ENCODE measurements at regions of chr1 and their contacts with region 1.

Region 1: GRCh38 chr1:61453111-61453961 is 271.6 kb downstream of the TM2D1 start:
- DNase-seq: peak; percentile 89 to 96 (median 93)
- ATAC-seq: peak; percentile 75 to 87
- H3K4me3 ChIP-seq: no peak overlapping the region
- H3K27ac ChIP-seq: peak overlapping the region; percentile 88
- H3K4me1 ChIP-seq: peaks cover 27% of the 10 kb centered on the region
- H3K27me3 ChIP-seq: no peaks in the 10 kb centered on the region

Region 2: GRCh38 chr1:60978421-60979357 is 474.6 kb before region 1 on chr1:
- intact Hi-C with region 1: loop called in 1 of 4 experiments (anchors 10 kb)
- DNase-seq: peak in 1 of 3 donors; percentile 48
- ATAC-seq: peak; percentile 56 to 68
- H3K4me3 ChIP-seq: no peak overlapping the region
- H3K27ac ChIP-seq: no peak overlapping the region
- H3K4me1 ChIP-seq: no peaks in the 10 kb centered on the region
- H3K27me3 ChIP-seq: no peaks in the 10 kb centered on the region

Region 3: DNA sequence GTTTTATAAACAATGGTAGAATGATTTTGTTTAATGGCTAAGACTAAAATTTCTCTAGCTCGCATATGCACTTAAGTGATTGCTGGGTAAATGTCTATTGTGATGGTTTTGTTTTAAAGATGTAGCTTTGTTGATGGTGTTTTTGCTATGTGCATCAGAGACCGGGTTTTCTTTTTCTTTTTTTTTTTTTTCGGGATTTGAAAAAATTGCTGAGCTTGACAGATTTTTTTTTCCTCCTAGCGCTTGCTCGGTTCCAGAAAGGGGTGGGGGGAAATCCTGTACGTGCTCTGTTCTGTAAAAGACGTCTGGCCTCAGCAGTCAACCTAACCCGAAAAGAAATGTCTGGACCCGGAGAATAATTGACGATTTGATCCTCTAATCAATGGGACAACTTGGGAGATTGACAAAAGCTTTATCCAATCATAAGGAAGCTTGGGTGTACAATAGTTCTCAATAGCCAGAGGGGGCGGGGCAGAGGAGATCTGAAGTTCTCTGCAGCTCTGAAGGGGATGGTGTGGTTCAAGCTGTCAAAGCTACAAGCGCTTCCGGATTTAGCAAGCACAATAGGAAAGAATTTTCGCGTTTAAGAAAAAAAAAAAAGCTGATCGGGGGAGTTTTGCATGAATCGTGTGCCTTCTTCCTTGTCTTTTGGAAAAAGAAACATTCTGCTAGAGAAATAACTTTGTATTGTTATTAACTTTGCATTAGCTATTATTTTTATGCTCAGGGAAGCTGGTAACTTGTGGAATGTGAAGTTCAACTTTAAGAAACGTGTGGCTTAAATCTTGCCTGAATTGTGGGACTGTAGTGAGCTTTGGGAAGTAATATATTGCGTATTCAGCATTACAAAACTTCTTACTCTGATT is 375.4 kb before region 1 on chr1:
- intact Hi-C with region 1: loop called in 1 of 4 experiments (anchors 10 kb)
- DNase-seq: peak; percentile 93 to 97 (median 94)
- ATAC-seq: peak; percentile 85 to 89
- H3K4me3 ChIP-seq: peak overlapping the region; percentile 91
- H3K27ac ChIP-seq: peak overlapping the region; percentile 62
- H3K4me1 ChIP-seq: peaks cover 8% of the 10 kb centered on the region
- H3K27me3 ChIP-seq: no peaks in the 10 kb centered on the region

Region 4: DNA sequence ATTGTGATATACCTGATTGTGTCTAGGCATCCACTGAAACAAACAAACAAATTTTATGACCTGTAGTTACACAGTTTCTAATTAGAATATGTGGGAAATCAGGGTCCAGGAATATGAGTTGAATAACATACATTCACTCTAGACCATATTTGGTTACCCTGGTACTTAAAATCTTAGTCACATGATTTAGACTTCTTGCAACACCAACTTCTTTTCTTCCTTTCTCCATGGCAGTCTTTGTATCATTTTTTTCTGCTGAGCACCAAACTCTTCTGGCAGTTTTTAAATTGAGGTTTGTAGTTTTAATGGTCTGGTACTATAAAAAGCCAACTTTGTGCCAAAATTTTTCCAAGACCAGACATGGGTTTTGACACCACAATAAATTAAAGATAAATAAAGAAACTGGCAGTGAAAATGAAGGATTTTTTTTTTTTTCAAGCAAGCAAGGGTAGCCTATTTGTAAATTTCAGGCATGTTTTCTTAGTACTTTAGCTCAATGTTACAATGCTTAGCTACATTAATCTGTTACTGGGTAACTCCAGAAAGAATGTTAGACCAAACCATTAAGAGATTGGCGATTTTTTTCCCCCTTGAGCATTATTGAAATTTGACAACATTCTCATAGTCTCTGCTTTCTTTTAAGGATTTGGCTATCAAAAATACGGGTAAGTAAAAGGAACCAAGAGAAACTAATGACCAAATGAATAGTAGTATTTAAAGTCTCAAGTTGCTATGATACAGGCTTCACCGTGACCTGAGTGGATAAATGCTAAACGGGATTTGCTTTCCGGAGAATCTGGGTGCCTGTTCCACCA is 262.5 kb before region 1 on chr1:
- intact Hi-C with region 1: loop called in 1 of 4 experiments (anchors 5 kb)
- DNase-seq: no peak
- ATAC-seq: no peak
- H3K4me3 ChIP-seq: no peak overlapping the region
- H3K27ac ChIP-seq: peak overlapping the region; percentile 47
- H3K4me1 ChIP-seq: peaks cover 8% of the 10 kb centered on the region
- H3K27me3 ChIP-seq: no peaks in the 10 kb centered on the region

Region 5: DNA sequence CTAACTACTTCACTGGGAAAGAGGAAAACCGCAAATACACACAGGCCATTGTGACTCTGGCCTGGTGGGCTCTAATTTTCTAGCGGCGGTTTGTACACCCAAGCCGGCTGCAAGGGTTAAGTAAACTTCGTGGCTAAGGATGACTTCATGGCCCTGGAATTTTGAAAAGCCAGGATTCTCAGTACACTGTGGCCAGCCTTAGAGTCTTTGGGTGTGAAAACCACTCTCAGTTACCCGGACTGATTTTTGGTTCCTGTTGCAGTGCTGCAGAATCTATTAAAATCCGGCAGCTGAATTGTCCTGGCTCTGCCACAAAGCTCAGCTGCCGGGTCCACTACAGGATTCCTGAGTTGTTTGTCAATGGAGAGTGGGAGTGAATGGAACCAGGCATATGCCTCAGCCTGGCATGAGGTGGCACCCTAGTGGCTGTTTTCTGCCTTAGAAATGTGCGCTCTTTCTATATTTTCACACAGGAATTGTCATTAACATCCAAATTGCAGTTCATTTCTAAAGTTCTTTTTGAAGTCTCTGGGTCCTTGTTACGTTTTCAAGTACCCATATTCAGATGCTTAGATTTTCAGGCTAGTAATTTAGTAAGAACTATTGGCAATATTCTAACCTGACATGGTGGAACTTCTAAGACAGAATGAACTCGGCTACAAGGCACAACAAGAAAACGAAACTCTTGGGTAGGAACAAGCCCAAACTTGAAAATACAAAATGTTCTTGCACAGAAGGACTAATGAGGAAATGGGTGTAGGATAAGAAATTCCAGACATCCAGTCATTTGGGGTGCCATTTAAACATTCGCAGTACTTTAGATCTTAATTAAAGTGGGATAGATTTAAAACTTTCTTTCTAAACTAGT is 115.1 kb before region 1 on chr1:
- intact Hi-C with region 1: loop called in 3 of 4 experiments (anchors 5 to 10 kb)
- DNase-seq: peak; percentile 69 to 87 (median 78)
- ATAC-seq: peak; percentile 90 to 91
- H3K4me3 ChIP-seq: peak overlapping the region; percentile 20
- H3K27ac ChIP-seq: peak overlapping the region; percentile 99
- H3K4me1 ChIP-seq: peaks cover 22% of the 10 kb centered on the region
- H3K27me3 ChIP-seq: no peaks in the 10 kb centered on the region

Region 6: DNA sequence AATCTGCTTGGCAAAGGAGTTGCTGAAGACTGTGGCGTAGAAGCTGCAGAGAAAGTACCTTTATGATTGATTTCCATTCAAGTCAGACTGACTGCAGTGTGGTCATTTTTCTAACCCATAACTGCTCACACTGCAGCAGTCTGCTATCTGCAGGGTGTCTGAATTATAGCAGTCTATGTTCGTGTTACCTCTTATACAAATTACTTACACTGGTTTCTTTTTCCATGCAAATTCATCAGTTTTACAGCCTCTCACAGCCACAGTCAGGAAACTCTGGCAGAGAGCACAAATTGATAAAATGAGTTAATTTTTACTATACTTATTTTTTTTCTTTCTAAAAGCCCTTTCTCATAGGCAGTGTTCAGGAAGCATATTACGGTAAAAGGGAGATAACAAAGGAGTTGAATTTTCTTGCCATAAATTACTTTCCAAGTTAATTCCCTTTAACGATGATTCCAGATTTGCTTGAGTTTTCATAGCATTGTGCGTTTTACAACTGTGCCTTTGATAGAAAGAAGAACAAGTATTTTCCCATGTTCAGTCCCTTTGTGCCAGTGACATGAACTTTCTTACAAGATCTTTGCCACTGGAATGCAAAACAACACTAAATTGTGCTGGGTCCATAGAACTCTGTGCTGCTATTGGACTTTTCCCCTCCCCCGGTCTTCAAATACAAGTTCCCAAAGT is 109.5 kb before region 1 on chr1:
- intact Hi-C with region 1: loop called in 3 of 4 experiments (anchors 5 to 10 kb)
- DNase-seq: no peak
- ATAC-seq: peak in 1 of 2 donors; percentile 38
- H3K4me3 ChIP-seq: no peak overlapping the region
- H3K27ac ChIP-seq: peak overlapping the region; percentile 17
- H3K4me1 ChIP-seq: peaks cover 12% of the 10 kb centered on the region
- H3K27me3 ChIP-seq: no peaks in the 10 kb centered on the region

Region 7: DNA sequence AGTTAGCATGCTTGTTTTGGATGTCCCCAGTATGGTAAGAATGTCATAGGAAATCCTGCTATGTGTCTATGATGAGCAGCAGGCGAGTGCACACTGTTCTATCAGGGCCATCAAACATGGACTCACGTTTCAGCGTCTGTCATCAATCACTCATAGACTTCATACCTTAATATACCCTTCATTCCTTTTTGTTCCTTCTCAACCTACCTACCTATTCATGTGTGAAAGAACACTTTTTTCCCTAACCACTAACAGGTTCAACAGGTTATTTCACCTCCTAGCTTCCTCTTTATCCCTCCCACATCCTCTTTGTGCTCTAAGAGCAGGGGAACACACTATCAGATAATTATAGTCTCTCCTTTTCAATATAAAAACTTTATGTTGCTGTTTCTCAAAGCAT is 29.0 kb before region 1 on chr1:
- intact Hi-C with region 1: no loop called
- DNase-seq: no peak
- ATAC-seq: no peak
- H3K4me3 ChIP-seq: no peak overlapping the region
- H3K27ac ChIP-seq: no peak overlapping the region
- H3K4me1 ChIP-seq: peaks cover 4% of the 10 kb centered on the region
- H3K27me3 ChIP-seq: no peaks in the 10 kb centered on the region

Region 8: GRCh38 chr1:61641578-61642336 is 188.4 kb after region 1 on chr1:
- intact Hi-C with region 1: loop called in 2 of 4 experiments (anchors 10 kb)
- DNase-seq: peak; percentile 85 to 93 (median 92)
- ATAC-seq: peak; percentile 90
- H3K4me3 ChIP-seq: no peak overlapping the region
- H3K27ac ChIP-seq: peak overlapping the region; percentile 80
- H3K4me1 ChIP-seq: peaks cover 2% of the 10 kb centered on the region
- H3K27me3 ChIP-seq: no peaks in the 10 kb centered on the region

Measured in right cardiac atrium (tissue), 5 donors.